ENCODE measurements at regions of chr13 and their contacts with region 1.

Region 1: DNA sequence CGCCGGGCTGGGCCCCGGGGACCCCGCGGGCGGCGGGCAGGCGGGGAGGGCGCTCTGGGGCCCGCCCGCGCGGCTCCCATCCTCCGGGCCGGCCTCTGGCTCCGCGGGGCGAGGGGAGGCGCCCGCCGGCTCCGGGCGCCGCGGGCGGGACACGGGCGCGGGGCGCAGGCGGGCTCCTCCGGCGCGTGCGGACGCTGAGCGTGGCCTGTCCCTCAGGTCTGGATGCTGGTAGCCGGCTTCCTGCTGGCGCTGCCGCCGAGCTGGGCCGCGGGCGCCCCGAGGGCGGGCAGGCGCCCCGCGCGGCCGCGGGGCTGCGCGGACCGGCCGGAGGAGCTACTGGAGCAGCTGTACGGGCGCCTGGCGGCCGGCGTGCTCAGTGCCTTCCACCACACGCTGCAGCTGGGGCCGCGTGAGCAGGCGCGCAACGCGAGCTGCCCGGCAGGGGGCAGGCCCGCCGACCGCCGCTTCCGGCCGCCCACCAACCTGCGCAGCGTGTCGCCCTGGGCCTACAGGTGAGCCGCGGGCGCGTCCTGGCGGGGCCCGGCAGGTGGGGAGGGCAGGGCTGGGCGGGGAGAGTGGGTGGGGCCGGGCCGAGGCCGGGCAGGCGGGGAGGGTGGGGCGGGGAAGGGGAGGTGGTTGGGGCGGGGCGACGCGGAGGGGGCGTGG is 414 bp downstream of the IL17D start:
- DNase-seq: peak; percentile 80
- ATAC-seq: peak; percentile 74

Region 2: GRCh38 chr13:20387441-20387971 is 316.4 kb before region 1 on chr13:
- intact Hi-C with region 1: no loop called
- DNase-seq: no peak
- ATAC-seq: peak; percentile 78

Region 3: DNA sequence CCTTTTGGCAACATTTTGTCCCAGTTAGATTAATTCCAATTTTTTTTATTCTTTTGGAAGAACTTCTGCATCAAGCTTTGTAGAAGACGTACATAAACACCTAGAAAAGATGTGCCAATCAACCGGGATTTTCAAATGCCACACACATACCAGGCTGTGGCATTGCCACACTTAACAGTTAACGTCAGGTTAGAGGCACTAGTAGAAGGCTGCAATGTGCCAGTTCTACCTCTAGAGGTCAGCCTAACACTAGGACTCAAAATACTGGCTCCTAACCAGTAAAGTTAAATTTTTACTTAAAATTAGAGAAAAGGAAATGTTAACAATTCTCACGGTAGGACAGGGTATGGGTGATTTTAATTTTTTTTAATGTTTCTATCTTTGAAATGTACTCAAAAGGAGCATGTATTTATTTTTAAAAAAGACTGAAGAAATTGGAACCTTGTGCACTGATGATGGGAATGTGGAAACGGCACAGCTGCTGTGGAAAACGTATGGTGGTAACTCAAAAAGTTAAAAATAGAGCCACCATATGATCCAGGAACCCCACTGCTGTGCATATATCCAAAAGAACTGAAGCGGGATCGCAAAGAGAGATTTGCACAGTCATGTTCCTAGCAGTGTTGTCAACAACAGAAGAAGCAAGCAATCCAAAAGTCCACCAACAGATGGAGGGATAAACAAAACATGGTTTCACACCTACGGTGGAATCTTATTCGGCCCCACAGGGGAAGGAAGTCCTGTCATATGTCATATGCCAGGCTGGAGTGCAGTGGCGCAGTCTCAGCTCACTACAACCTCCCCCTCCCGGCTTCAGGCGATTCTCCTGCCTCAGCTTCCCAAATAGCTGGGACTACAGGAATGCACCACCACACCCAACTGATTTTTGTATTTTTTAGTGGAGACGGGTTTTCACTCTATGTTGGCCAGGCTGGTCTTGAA is 208.6 kb before region 1 on chr13:
- intact Hi-C with region 1: loop called (anchors 10 kb)
- DNase-seq: peak; percentile 77
- ATAC-seq: peak; percentile 89

Region 4: GRCh38 chr13:21913010-21913409 is 1209.1 kb after region 1 on chr13:
- intact Hi-C with region 1: no loop called
- DNase-seq: no peak
- ATAC-seq: no peak